GM12878 (cell line): ENCODE measurements at regions of chr14 and their contacts with region 1.

Region 1: GRCh38 chr14:68312884-68313610 is 479.8 kb downstream of the ZFP36L1 start:
- DNase-seq: peak; percentile 99
- ATAC-seq: peak; percentile 89
- H3K4me3 ChIP-seq: no peak overlapping the region; the same call in 1 of the 2 replicates
- H3K27ac ChIP-seq: peak overlapping the region; percentile 91
- H3K4me1 ChIP-seq: peaks cover 64% of the 10 kb centered on the region
- H3K27me3 ChIP-seq: no peaks in the 10 kb centered on the region
- CTCF ChIP-seq: no peak
- EP300 ChIP-seq: peak; percentile 88 to 97; a peak in 3 of 4 replicates
- POLR2A ChIP-seq: peak; percentile 49; the same call in 1 of the 2 replicates
- RAD21 ChIP-seq: peak; percentile 41

Region 2: GRCh38 chr14:68268197-68268596 is 44.9 kb before region 1 on chr14:
- CTCF ChIA-PET with region 1: interaction called, 4 read pairs
- POLR2A ChIA-PET with region 1: interaction called, 5 read pairs
- RAD21 ChIA-PET with region 1: interaction called, 21 read pairs
- SMC1A ChIA-PET with region 1: interaction called, 23 read pairs
- in situ Hi-C with region 1: no loop called
- intact Hi-C with region 1: loop called (anchors 5 kb)
- DNase-seq: peak; percentile 93
- ATAC-seq: peak; percentile 84
- H3K4me3 ChIP-seq: no peak overlapping the region
- H3K27ac ChIP-seq: peak overlapping the region; percentile 84
- H3K4me1 ChIP-seq: peaks cover 73% of the 10 kb centered on the region
- H3K27me3 ChIP-seq: no peaks in the 10 kb centered on the region
- CTCF ChIP-seq: no peak
- EP300 ChIP-seq: peak; percentile 93 to 100; a peak in 3 of 4 replicates
- POLR2A ChIP-seq: no peak
- RAD21 ChIP-seq: peak; percentile 22

Region 3: DNA sequence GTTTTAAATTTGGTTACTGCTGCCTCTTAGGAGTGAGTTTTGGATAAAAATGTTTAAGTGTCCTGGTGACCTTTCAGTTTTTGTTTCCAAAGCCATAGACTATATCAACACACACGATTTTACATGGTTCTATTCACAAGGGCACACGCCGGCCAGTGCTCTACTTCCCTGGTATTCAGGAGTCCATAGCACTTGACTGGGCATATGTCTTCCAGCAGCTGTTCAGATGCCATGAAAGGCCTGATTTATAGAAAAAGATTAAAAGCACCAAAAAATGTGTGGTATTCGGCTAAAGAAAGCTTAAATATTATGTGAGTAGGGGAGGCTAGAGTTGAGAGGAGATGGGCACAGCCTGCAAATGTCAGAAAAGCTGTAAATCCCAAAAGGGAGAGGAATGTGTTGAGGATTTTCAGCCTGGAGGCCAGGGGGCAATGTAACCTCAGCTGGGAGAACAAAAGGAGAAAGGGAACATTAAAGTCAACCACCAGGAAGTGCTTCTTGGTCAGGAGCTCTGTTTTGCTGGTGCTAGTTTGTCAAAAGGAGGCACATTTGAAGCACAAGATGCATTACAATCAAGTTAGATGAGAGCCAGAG is 15.1 kb before region 1 on chr14:
- CTCF ChIA-PET with region 1: no interaction called
- POLR2A ChIA-PET with region 1: interaction called, 5 read pairs
- RAD21 ChIA-PET with region 1: interaction called, 59 read pairs
- SMC1A ChIA-PET with region 1: interaction called, 321 read pairs
- in situ Hi-C with region 1: no loop called
- intact Hi-C with region 1: no loop called
- DNase-seq: no peak
- ATAC-seq: no peak
- H3K4me3 ChIP-seq: no peak overlapping the region
- H3K27ac ChIP-seq: peak overlapping the region; percentile 20; the same call in 1 of the 2 replicates
- H3K4me1 ChIP-seq: peaks cover 25% of the 10 kb centered on the region
- H3K27me3 ChIP-seq: no peaks in the 10 kb centered on the region
- CTCF ChIP-seq: no peak
- EP300 ChIP-seq: no peak
- POLR2A ChIP-seq: no peak
- RAD21 ChIP-seq: no peak

Region 4: GRCh38 chr14:68341411-68342212 is 28.6 kb after region 1 on chr14:
- CTCF ChIA-PET with region 1: no interaction called
- POLR2A ChIA-PET with region 1: no interaction called
- RAD21 ChIA-PET with region 1: interaction called, 3 read pairs
- SMC1A ChIA-PET with region 1: interaction called, 44 read pairs
- in situ Hi-C with region 1: no loop called
- intact Hi-C with region 1: loop called (anchors 2 kb)
- DNase-seq: peak; percentile 71
- ATAC-seq: peak; percentile 87
- H3K4me3 ChIP-seq: no peak overlapping the region
- H3K27ac ChIP-seq: peak overlapping the region; percentile 75
- H3K4me1 ChIP-seq: peaks cover 44% of the 10 kb centered on the region
- H3K27me3 ChIP-seq: no peaks in the 10 kb centered on the region
- CTCF ChIP-seq: no peak
- EP300 ChIP-seq: peak; percentile 61 to 76; a peak in 2 of 4 replicates
- POLR2A ChIP-seq: no peak
- RAD21 ChIP-seq: no peak

Region 5: DNA sequence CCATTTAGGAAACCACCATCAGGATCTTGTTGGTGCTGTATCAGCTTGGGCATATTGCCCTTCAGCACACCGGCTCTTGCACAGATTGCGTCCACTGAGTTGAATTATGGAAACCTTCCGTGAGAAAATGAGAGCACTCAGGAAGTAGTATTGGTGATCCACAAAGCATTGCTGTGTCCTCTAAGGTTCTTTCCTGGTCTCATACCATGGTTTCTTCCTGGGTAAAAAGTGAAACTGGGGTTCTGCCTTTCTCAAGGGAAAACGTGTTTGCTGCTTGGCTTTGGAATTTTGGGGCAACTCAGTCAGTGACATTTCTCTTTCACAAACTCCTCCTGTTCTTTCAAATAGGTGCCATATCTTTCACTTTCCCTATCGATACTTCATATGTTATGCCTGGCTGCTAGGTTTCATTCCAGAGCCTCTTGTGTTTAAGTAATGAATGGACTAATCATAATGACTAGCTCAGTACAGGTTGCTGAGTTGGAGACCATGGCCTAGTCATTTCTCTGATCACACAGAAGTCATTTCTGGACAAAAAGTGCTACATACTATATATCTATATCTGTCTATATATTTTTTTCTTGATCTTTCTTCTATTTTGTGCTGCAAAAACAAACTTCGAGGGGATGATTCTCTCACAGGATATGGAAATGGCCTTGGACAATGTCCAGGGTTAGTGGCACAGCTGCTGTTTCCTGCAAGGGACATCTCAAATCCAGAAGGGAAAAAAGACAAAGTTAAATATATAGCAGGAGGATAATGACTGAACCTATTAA is 56.4 kb after region 1 on chr14:
- CTCF ChIA-PET with region 1: interaction called, 17 read pairs
- POLR2A ChIA-PET with region 1: interaction called, 17 read pairs
- RAD21 ChIA-PET with region 1: interaction called, 39 read pairs
- SMC1A ChIA-PET with region 1: interaction called, 151 read pairs
- in situ Hi-C with region 1: no loop called
- intact Hi-C with region 1: loop called (anchors 2 kb)
- DNase-seq: peak; percentile 85
- ATAC-seq: peak; percentile 83
- H3K4me3 ChIP-seq: peak overlapping the region; percentile 24; the same call in 1 of the 2 replicates
- H3K27ac ChIP-seq: peak overlapping the region; percentile 94
- H3K4me1 ChIP-seq: peaks cover 55% of the 10 kb centered on the region
- H3K27me3 ChIP-seq: no peaks in the 10 kb centered on the region
- CTCF ChIP-seq: no peak
- EP300 ChIP-seq: no peak
- POLR2A ChIP-seq: no peak
- RAD21 ChIP-seq: 0 out of 2 replicates have a peak, but pooled peaks have one; percentile 20

Region 6: GRCh38 chr14:68593806-68594561 is 280.9 kb after region 1 on chr14:
- CTCF ChIA-PET with region 1: no interaction called
- POLR2A ChIA-PET with region 1: no interaction called
- RAD21 ChIA-PET with region 1: no interaction called
- SMC1A ChIA-PET with region 1: no interaction called
- in situ Hi-C with region 1: no loop called
- intact Hi-C with region 1: no loop called
- DNase-seq: no peak
- ATAC-seq: no peak
- H3K4me3 ChIP-seq: no peak overlapping the region
- H3K27ac ChIP-seq: no peak overlapping the region
- H3K4me1 ChIP-seq: no peaks in the 10 kb centered on the region
- H3K27me3 ChIP-seq: no peaks in the 10 kb centered on the region
- CTCF ChIP-seq: no peak
- EP300 ChIP-seq: no peak
- POLR2A ChIP-seq: no peak
- RAD21 ChIP-seq: no peak